Left cardiac atrium (tissue), 4 donors: ENCODE measurements at regions of chr4 and their contacts with region 1.

Region 1: GRCh38 chr4:13548984-13549546 is 4.8 kb upstream of the NKX3-2 start:
- DNase-seq: peak; percentile 80
- ATAC-seq: peak; percentile 58 to 66

Region 2: GRCh38 chr4:12729384-12729783 is 819.7 kb before region 1 on chr4:
- intact Hi-C with region 1: loop called (anchors 2 to 10 kb)
- DNase-seq: no peak
- ATAC-seq: no peak

Region 3: GRCh38 chr4:12734586-12734985 is 814.5 kb before region 1 on chr4:
- intact Hi-C with region 1: loop called (anchors 2 to 10 kb)
- DNase-seq: no peak
- ATAC-seq: no peak

Region 4: GRCh38 chr4:12852338-12853307 is 696.4 kb before region 1 on chr4:
- intact Hi-C with region 1: loop called (anchors 5 kb)
- DNase-seq: no peak
- ATAC-seq: peak; percentile 76 to 83

Region 5: GRCh38 chr4:13151194-13151593 is 397.9 kb before region 1 on chr4:
- intact Hi-C with region 1: no loop called
- DNase-seq: no peak
- ATAC-seq: no peak